ENCODE measurements at regions of chr9 and their contacts with region 1.

Region 1: GRCh38 chr9:17837965-17838364 is 259.1 kb downstream of the SH3GL2 start:
- DNase-seq: no peak
- H3K4me3 ChIP-seq: no peak overlapping the region
- H3K27ac ChIP-seq: no peak overlapping the region
- H3K4me1 ChIP-seq: no peaks in the 10 kb centered on the region
- H3K27me3 ChIP-seq: no peaks in the 10 kb centered on the region
- CTCF ChIP-seq: peak in 1 of 2 donors; percentile 14

Region 2: GRCh38 chr9:17810728-17811571 is 27.0 kb before region 1 on chr9:
- CTCF ChIA-PET with region 1: no interaction called
- dilution Hi-C with region 1: no loop called
- in situ Hi-C with region 1: no loop called
- intact Hi-C with region 1: no loop called
- DNase-seq: peak; percentile 28
- H3K4me3 ChIP-seq: no peak overlapping the region
- H3K27ac ChIP-seq: no peak overlapping the region
- H3K4me1 ChIP-seq: no peaks in the 10 kb centered on the region
- H3K27me3 ChIP-seq: peaks cover 1% of the 10 kb centered on the region
- CTCF ChIP-seq: peak; percentile 72 to 85

Region 3: GRCh38 chr9:17942230-17942897 is 104.4 kb after region 1 on chr9:
- CTCF ChIA-PET with region 1: no interaction called
- dilution Hi-C with region 1: no loop called
- in situ Hi-C with region 1: loop called in 1 of 2 experiments (anchors 25 kb)
- intact Hi-C with region 1: no loop called
- DNase-seq: no peak
- H3K4me3 ChIP-seq: no peak overlapping the region
- H3K27ac ChIP-seq: no peak overlapping the region
- H3K4me1 ChIP-seq: no peaks in the 10 kb centered on the region
- H3K27me3 ChIP-seq: no peaks in the 10 kb centered on the region
- CTCF ChIP-seq: no peak

Region 4: GRCh38 chr9:19464764-19465585 is 1627.0 kb after region 1 on chr9:
- CTCF ChIA-PET with region 1: interaction called, 17 read pairs
- dilution Hi-C with region 1: no loop called
- in situ Hi-C with region 1: no loop called
- intact Hi-C with region 1: no loop called
- DNase-seq: peak; percentile 63
- H3K4me3 ChIP-seq: peak overlapping the region; percentile 10 to 43 (median 40)
- H3K27ac ChIP-seq: no peak overlapping the region
- H3K4me1 ChIP-seq: peaks cover 4% of the 10 kb centered on the region
- H3K27me3 ChIP-seq: no peaks in the 10 kb centered on the region
- CTCF ChIP-seq: peak; percentile 49 to 65